Activated CD4-positive, alpha-beta T cell treated with anti-CD3 and anti-CD28 coated beads for 36 hours (primary cell): ENCODE measurements at regions of chr3 and their contacts with region 1.

Region 1: GRCh38 chr3:53555068-53555588 is 60.7 kb downstream of the CACNA1D start:
- DNase-seq: peak; percentile 70
- ATAC-seq: peak; percentile 92
- H3K4me3 Mint-ChIP-seq: no peak overlapping the region
- H3K27ac Mint-ChIP-seq: peak overlapping the region; percentile 58
- H3K4me1 Mint-ChIP-seq: peaks cover 24% of the 10 kb centered on the region
- H3K27me3 Mint-ChIP-seq: peaks cover 16% of the 10 kb centered on the region

Region 2: DNA sequence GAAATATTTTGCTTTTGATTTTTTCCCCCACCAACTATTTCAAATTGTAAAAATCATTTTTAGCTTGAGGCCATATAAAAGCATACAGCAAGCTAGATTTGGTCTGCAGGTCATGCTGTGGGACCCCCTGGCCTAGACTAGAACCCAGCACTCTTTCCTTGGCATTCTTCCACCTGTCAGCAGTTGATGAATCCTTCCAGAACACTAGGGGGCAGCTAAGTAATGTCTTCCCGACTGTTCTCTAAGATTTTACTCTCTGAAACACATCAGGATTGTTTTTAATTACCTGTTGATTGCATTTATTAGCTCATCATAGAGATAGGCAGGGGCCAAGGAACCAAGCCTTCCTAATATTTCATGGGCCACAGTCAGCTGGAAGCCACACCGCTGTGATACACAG is 113.7 kb after region 1 on chr3:
- CTCF ChIA-PET with region 1: no interaction called
- POLR2A ChIA-PET with region 1: no interaction called
- intact Hi-C with region 1: no loop called
- DNase-seq: no peak
- ATAC-seq: no peak
- H3K4me3 Mint-ChIP-seq: no peak overlapping the region
- H3K27ac Mint-ChIP-seq: no peak overlapping the region
- H3K4me1 Mint-ChIP-seq: no peaks in the 10 kb centered on the region
- H3K27me3 Mint-ChIP-seq: peaks cover 12% of the 10 kb centered on the region

Region 3: GRCh38 chr3:53891497-53892285 is 336.6 kb after region 1 on chr3 and contains the start of gene SELENOK:
- CTCF ChIA-PET with region 1: no interaction called
- POLR2A ChIA-PET with region 1: no interaction called
- intact Hi-C with region 1: loop called in 1 of 2 experiments (anchors 2 kb)
- DNase-seq: peak; percentile 98
- ATAC-seq: peak; percentile 95
- H3K4me3 Mint-ChIP-seq: peak within 1 kb of the TSS; percentile 85
- H3K27ac Mint-ChIP-seq: peak within 1 kb of the TSS; percentile 95
- H3K4me1 Mint-ChIP-seq: peaks cover 48% of the 10 kb centered on the region
- H3K27me3 Mint-ChIP-seq: peaks cover 6% of the 10 kb centered on the region
- total RNA-seq, gene SELENOK: 31.6 to 45.1 TPM